ENCODE measurements at regions of chr2 and their contacts with region 1.

Region 1: DNA sequence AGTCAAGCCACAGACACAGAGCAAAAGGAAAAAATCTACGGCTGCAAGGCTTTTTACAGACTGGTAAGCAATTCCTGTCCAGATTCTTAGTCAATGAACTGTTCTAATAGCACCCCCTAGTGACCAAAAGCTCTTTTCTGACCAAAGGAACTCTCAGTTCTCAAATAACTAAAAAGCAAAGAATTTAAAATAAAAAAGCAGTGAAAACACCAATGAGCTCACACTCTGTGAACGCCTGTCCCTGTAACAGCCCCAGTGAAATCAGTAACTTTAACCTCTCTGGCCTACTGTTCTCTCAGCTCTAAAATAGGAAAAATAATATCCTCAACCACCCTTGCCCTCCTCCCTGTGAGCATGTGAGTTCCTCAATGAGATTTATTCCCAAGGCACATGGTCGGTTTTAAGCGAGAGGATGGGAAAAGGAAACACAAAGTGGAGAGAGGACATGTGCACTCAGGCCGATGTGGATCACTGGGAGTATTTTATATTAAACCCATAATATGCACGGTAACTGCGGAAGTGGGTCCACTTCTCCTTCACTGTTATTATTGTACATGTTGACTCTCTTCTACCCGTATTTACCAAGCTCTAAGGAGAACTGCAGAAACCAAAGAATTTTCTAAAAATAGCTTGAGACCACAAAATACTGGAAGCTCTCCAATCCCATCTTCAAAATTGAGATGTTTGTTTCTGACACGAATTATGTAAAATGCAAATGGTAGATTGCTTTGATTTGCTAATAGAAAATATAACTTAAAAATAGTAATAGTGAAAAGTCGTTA is 128.5 kb downstream of the STK39 start:
- DNase-seq: peak; percentile 54
- H3K4me3 ChIP-seq: no peak overlapping the region
- H3K27ac ChIP-seq: no peak overlapping the region
- H3K27me3 ChIP-seq: no peaks in the 10 kb centered on the region
- CTCF ChIP-seq: peak; percentile 70

Region 2: DNA sequence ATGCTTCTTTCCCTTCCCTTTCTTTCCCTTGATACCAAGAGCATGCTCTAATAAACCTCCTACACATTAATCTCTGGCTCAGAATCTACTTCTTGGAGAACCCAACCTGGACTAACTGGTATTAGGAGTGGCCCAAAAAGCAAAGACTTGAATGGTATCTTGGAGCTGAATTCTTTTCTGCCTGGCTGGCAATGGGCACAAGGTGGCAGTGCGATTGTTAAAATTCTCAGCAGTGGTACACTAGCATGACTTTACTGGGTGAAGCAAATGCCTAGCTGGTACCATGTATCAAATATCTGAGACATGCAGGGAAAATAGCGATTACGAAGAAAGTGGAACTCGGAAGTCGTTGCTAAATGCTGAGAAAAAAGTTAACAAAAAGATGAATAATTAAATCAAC is 854.5 kb before region 1 on chr2:
- CTCF ChIA-PET with region 1: interaction called, 15 read pairs
- POLR2A ChIA-PET with region 1: no interaction called
- DNase-seq: no peak
- H3K4me3 ChIP-seq: no peak overlapping the region
- H3K27ac ChIP-seq: no peak overlapping the region
- H3K27me3 ChIP-seq: no peaks in the 10 kb centered on the region
- CTCF ChIP-seq: peak; percentile 36

Region 3: DNA sequence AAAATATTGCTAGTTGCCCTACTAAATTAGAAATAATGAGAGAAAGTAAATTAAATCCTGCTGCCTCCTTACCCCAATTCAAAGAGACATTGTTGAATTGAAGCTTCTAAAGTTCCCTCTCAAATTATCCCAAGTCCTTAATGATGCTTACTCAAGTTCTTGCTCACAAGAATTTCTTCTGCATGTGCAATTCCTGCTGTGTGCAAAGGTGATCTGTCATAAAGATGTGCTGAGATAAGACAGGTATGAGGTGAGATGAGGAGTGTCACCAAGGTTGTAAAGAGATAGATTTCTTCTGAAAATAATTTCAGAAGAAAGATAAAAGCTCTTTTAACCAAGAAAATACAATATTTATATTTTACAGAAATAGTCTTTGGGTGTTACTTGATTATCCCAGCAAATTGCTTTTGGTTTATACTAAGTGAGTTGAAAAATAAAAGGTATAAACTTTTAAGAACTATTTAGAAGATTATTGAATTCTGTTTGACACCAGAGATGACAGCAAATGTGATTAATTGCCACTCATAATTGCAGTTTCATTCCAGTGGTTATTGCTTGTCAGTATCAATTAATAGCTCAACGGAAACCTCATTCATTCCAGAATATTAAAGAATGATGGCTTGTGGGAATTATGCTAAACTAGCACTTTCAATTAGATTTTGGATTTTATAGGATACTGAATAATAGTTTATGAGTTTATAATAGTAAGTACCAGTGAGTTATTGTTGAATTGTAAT is 545.9 kb before region 1 on chr2:
- CTCF ChIA-PET with region 1: interaction called, 13 read pairs
- POLR2A ChIA-PET with region 1: no interaction called
- DNase-seq: no peak
- H3K4me3 ChIP-seq: no peak overlapping the region
- H3K27ac ChIP-seq: no peak overlapping the region
- H3K27me3 ChIP-seq: no peaks in the 10 kb centered on the region
- CTCF ChIP-seq: no peak

Region 4: DNA sequence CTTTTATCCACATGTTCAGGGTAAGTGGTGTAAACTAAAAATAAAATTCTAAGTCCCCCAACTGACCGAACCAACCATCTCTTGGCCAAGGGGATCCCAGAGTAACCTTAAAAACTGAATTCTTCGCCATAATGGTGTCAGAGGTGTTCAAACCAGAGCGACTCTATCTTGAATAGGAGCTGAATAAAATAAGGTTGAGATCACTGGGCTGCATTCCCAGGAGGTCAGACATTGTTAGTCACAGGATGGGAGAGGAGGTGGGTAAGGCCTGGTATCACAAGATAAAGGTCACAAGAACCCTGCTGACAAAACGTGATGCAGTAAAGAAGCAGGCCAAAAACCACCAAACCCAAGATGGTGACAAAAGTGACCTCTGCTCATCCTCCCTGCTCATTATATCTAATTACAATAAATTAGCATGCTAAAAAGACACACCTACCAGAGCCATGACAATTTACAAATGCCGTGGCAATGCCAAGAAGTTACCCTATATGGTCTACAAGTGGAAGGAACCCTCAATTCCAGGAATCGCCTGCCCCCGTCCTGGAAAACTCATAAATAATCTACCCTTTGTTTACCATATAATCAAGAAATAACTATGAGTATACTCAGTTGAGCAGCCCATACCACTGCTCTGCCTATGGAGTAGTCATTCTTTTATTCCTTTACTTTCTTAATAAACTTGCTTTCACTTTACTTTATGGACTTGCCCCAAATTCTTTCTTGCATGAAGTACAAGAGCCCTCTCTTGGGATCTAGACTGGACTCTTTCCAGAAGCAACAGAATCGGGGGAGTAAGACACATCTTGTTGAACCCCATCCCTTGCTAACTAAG is 173.9 kb before region 1 on chr2:
- CTCF ChIA-PET with region 1: interaction called, 31 read pairs
- POLR2A ChIA-PET with region 1: no interaction called
- DNase-seq: no peak
- H3K4me3 ChIP-seq: no peak overlapping the region
- H3K27ac ChIP-seq: no peak overlapping the region
- H3K27me3 ChIP-seq: no peaks in the 10 kb centered on the region
- CTCF ChIP-seq: no peak

Region 5: DNA sequence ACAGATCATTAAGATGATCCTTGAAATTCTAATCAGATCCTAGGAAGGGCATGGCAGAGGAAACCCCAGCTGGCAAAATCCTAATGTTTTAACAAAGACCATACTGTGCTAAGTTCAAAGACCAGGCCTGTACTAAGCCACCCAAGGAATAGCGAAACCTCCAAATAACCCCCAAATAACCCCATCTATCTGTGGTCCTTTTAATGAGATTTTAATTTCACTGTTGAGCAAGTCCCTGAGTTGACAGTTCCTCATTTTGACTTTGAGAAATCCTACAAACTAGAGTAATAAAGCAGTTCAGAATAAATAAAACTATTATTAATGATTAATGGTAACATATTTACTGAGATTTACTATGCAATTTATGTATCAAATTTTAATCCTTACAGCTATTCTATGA is 131.4 kb before region 1 on chr2:
- CTCF ChIA-PET with region 1: interaction called, 60 read pairs
- POLR2A ChIA-PET with region 1: no interaction called
- DNase-seq: no peak
- H3K4me3 ChIP-seq: no peak overlapping the region
- H3K27ac ChIP-seq: no peak overlapping the region
- H3K27me3 ChIP-seq: no peaks in the 10 kb centered on the region
- CTCF ChIP-seq: no peak

Region 6: GRCh38 chr2:168025487-168026202 is 93.3 kb before region 1 on chr2:
- CTCF ChIA-PET with region 1: no interaction called
- POLR2A ChIA-PET with region 1: no interaction called
- DNase-seq: no peak
- H3K4me3 ChIP-seq: no peak overlapping the region
- H3K27ac ChIP-seq: no peak overlapping the region
- H3K27me3 ChIP-seq: no peaks in the 10 kb centered on the region
- CTCF ChIP-seq: no peak

Region 7: DNA sequence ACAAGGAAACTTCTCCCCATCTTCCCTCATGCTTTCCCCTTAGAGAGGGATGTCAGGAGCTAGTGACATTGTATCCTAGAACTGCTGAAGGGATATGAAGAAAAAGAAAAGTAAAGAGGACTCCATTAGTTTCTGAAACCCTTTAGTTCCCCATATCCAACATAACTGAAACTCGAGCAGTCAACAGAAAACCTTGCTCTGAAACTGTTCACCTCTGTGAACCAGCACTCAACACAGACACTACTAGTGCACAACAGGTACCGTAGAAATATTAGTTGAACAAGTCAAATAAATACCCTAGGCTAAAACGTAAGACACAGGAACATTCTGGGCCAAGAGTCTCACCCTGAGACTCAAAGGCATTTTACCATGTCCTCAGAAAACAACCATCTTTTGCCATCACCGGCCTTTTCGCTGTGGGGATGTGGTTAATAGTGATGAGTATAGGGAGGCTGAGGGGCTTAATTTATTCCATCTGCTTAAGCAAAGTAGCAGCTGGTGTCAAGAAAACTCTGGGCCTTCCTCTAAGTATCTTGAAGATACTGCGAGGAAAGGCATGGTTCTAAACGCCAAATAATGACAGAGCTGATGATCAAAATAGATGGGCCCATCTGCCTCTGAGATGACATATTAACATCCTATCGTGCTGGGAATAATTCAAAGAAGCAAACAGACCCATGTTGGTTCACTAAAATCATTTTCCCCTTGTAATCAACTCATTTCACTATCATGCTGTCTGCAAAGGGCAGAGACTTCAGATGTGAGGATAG is 28.4 kb before region 1 on chr2:
- CTCF ChIA-PET with region 1: interaction called, 19 read pairs
- POLR2A ChIA-PET with region 1: no interaction called
- DNase-seq: no peak
- H3K4me3 ChIP-seq: no peak overlapping the region
- H3K27ac ChIP-seq: no peak overlapping the region
- H3K27me3 ChIP-seq: no peaks in the 10 kb centered on the region
- CTCF ChIP-seq: no peak

Region 8: DNA sequence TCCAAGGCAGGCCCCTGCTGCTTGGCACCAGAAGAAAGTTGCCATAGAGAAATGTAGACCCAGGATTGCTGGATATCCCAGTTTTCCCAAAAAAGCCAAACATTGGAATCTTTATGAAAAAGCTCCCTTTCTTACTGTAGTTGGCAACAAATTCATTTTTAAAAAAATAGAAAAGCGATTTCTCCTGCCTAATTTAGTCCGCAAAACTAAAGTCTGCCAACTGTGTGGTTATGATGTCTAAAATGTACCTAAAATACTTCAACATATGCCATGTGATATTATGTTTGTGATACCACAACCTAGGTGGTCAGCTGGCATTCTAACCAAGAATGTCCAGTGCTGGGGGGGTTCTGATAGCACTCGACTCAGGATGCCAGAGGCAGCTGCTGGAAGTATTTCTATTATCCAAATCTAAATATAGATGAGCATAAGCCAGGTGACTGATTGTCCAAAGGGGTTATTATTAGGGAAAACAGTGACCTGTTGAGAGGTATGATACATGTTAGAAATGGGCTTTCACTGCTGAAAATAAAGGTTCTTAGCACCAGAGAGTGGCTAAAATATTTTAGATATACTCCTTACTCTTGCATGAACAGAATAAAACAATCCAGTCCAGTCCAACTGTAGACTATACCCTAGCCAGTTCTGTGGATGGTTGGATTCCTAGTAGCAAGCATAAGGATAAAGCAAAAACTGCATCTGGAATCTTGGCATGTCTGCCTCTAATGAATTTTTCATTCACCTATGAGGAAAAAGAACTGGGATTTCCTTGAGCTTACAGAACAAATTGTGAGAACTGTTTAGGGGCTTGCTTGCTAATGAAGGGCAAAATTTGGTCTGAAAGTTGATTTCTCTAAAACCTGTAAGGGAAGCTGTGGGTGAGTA is 26.7 kb after region 1 on chr2:
- CTCF ChIA-PET with region 1: interaction called, 14 read pairs
- POLR2A ChIA-PET with region 1: no interaction called
- DNase-seq: no peak
- H3K4me3 ChIP-seq: no peak overlapping the region
- H3K27ac ChIP-seq: no peak overlapping the region
- H3K27me3 ChIP-seq: no peaks in the 10 kb centered on the region
- CTCF ChIP-seq: no peak

Measured in AG04450 (cell line).